ENCODE measurements at regions of chr1 and their contacts with region 1.

Region 1: DNA sequence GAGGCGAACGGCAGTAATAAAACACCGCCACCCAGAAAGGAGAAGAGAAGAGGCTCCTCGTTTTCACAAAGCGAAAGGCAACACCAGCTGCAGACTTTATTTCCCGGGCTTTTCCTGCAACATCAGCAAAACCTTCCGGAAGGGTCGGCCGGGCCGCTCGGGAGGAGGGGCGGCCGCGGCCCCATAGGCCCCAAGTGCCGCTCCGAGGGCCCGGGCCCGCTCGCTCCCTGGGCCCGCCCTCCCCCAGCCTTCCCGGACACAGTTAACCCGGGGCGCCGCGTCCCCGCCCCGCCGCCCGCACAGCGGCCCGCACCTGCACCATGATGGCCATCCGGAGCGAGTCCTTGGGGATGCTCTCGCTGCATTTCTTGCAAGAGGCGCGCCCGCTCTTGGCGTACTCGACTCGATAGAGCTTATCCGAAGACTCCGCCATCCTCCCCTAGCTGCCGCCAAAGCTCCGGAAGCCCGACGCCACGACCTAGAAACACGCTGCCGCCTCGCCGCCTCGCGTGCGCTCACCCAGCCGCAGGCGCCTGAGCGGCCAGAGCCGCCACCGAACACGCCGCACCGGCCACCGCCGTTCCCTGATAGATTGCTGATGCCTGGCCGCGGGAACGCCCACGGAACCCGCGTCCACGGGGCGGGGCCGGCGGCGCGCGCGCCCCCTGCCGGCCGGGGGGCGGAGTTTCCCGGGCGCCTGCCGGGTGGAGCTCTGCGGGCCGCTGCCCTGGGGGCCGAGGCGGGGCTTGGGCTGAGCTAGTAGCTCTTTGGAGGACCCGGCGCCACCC is at the start of gene PARP1:
- DNase-seq: peak; percentile 98
- H3K4me3 ChIP-seq: peak within 1 kb of the TSS; percentile 91
- H3K27ac ChIP-seq: peak within 1 kb of the TSS; percentile 91
- H3K4me1 ChIP-seq: peaks cover 42% of the 10 kb centered on the region
- CTCF ChIP-seq: peak; percentile 85
- total RNA-seq, gene PARP1: 532 and 610 TPM in 2 replicates

Region 2: GRCh38 chr1:226209307-226210059 is 198.2 kb before region 1 on chr1:
- CTCF ChIA-PET with region 1: no interaction called
- POLR2A ChIA-PET with region 1: no interaction called
- intact Hi-C with region 1: no loop called
- DNase-seq: no peak
- H3K4me3 ChIP-seq: no peak overlapping the region
- H3K27ac ChIP-seq: no peak overlapping the region
- H3K4me1 ChIP-seq: peaks cover 10% of the 10 kb centered on the region
- CTCF ChIP-seq: no peak

Region 3: GRCh38 chr1:226308723-226309315 is 98.9 kb before region 1 on chr1 and contains the start of gene LIN9:
- CTCF ChIA-PET with region 1: no interaction called
- POLR2A ChIA-PET with region 1: interaction called, 13 read pairs
- intact Hi-C with region 1: loop called (anchors 1 kb)
- DNase-seq: peak; percentile 95
- H3K4me3 ChIP-seq: peak within 1 kb of the TSS; percentile 97
- H3K27ac ChIP-seq: peak within 1 kb of the TSS; percentile 76
- H3K4me1 ChIP-seq: peaks cover 53% of the 10 kb centered on the region
- CTCF ChIP-seq: peak; percentile 24; the same call in 1 of the 2 replicates
- total RNA-seq, gene LIN9: 17.2 and 19.7 TPM in 2 replicates

Region 4: GRCh38 chr1:226370144-226370923 is 37.4 kb before region 1 on chr1:
- CTCF ChIA-PET with region 1: no interaction called
- POLR2A ChIA-PET with region 1: interaction called, 4 read pairs
- intact Hi-C with region 1: loop called (anchors 1 kb)
- DNase-seq: peak; percentile 83
- H3K4me3 ChIP-seq: peak overlapping the region; percentile 61
- H3K27ac ChIP-seq: peak overlapping the region; percentile 88
- H3K4me1 ChIP-seq: peaks cover 53% of the 10 kb centered on the region
- CTCF ChIP-seq: no peak

Region 5: DNA sequence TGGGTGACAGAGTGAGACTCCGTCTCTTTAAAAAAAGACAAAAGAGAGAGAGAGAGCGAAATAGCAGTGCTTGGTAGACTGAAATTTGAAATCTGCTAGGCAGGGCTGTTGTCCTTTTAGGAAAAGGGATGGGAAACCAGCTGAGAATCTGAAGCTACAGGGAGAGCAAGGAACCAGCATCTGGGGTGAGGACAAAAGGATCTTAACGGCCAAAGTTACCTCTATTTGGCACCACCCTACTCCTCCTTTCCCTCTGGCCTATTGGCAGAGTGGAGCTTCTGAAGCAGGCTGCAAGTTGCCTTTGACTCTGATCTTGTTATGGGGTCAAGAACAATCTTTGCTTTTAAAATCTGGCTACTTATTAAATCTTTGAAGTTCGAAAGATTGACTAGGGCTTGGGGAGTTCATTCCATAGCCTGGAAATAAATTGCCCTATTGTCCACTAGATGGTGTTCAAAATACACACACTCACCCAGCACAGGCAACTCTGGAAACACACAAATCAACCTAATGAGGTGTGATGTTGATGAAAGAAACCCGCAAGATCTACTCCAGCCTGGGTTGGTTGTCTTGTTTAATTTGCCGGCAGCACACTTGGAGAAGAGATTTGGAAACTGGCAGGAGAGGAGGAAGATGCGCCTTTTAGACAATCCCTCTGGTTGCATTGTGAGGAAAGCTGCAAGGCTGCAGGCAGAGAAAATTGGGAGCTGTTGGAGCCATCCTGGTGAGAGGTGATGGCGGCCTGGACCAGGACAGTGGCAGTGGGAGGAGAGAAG is 16.7 kb after region 1 on chr1:
- CTCF ChIA-PET with region 1: interaction called, 4 read pairs
- POLR2A ChIA-PET with region 1: interaction called, 106 read pairs
- intact Hi-C with region 1: no loop called
- DNase-seq: peak; percentile 87
- H3K4me3 ChIP-seq: peak overlapping the region; percentile 51
- H3K27ac ChIP-seq: peak overlapping the region; percentile 66
- H3K4me1 ChIP-seq: peaks cover 65% of the 10 kb centered on the region
- CTCF ChIP-seq: peak; percentile 98

Region 6: DNA sequence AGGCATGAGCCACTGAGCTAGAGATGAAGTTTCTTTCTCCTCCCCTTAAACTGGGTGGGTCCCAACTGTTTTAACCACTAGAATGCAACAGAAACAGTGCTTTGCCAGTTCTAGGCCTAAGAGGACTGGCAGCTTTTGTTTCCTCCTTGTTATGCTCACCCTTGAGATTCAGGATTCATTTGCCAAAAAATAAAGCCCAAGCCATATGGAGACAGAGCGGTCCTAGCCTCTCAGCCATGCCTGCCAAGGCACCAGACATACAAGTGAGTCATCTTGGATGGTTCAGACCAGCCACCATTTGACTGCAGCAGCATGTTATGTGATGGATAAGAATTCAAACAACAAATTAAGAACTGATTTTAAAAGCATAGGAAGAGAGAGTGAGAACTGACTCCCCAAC is 102.8 kb after region 1 on chr1:
- CTCF ChIA-PET with region 1: no interaction called
- POLR2A ChIA-PET with region 1: no interaction called
- intact Hi-C with region 1: no loop called
- DNase-seq: no peak
- H3K4me3 ChIP-seq: no peak overlapping the region
- H3K27ac ChIP-seq: no peak overlapping the region
- H3K4me1 ChIP-seq: no peaks in the 10 kb centered on the region
- CTCF ChIP-seq: no peak

Region 7: GRCh38 chr1:226679853-226680516 is 272.3 kb after region 1 on chr1:
- CTCF ChIA-PET with region 1: no interaction called
- POLR2A ChIA-PET with region 1: no interaction called
- intact Hi-C with region 1: loop called (anchors 5 kb)
- DNase-seq: peak; percentile 84
- H3K4me3 ChIP-seq: peak overlapping the region; percentile 47
- H3K27ac ChIP-seq: peak overlapping the region; percentile 98
- H3K4me1 ChIP-seq: peaks cover 99% of the 10 kb centered on the region
- CTCF ChIP-seq: no peak